HepG2 (cell line): ENCODE measurements at regions of chr6 and their contacts with region 1.

Region 1: DNA sequence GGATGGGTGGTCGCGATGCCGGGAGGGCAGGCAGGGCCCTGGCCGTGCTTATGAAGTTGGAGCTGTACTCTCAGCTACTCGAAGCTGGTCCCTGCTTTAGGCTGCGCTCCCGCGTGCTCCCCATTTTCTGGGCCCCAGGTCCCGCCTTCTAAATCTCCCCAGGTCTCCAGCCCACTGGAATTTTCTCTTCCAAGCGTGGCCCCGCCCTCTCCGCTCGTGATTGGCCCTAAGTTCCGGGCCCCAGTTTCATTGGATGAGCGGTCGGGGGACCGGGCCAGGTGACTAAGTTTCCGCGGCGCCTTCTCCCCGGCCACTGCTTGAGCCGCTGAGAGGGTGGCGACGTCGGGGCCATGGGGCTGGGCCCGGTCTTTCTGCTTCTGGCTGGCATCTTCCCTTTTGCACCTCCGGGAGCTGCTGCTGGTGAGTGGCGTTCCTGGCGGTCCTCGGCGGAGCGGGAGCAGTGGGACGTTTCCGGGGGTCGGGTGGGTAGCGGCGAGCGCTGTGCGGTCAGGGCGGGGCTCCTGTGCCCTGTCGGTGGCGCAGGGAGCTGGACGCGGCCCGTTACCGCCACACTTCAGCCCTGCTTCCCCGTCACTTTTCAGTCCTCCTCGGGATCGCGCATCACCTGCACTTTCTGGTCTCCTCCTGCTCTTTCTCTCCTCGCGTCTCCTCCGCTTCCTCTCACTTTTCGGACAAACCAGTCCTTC is at the start of gene MICA:
- DNase-seq: peak; percentile 91
- ATAC-seq: peak; percentile 84
- H3K4me3 ChIP-seq: peak within 1 kb of the TSS; percentile 88 to 96 (median 96)
- H3K27ac ChIP-seq: peak within 1 kb of the TSS; percentile 87
- H3K4me1 ChIP-seq: peaks cover 67% of the 10 kb centered on the region
- H3K27me3 ChIP-seq: no peaks in the 10 kb centered on the region; a peak in 1 of 5 replicates
- CTCF ChIP-seq: peak; percentile 36; the same call in 1 of the 2 replicates
- EP300 ChIP-seq: no peak
- POLR2A ChIP-seq: peak; percentile 70 to 94
- RAD21 ChIP-seq: no peak
- total RNA-seq, gene MICA: 20.5 and 38.1 TPM in 2 replicates

Region 2: DNA sequence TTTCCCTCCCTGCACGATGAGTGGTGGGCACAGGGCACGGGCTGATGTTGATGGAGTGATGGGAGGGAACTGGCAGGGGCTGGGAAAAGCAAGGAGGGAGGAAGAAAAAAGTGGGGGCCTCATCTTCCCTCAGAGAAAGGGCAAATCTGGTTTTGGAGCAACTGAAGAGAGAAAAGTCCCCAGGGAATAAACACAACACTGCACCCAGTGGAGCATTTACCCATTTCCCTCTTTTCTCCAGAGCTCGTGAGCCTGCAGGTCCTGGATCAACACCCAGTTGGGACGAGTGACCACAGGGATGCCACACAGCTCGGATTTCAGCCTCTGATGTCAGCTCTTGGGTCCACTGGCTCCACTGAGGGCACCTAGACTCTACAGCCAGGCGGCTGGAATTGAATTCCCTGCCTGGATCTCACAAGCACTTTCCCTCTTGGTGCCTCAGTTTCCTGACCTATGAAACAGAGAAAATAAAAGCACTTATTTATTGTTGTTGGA is 11.4 kb after region 1 on chr6:
- CTCF ChIA-PET with region 1: no interaction called
- POLR2A ChIA-PET with region 1: interaction called, 10 read pairs
- in situ Hi-C with region 1: no loop called
- intact Hi-C with region 1: no loop called
- DNase-seq: no peak
- ATAC-seq: peak; percentile 41
- H3K4me3 ChIP-seq: no peak overlapping the region
- H3K27ac ChIP-seq: peak overlapping the region; percentile 42
- H3K4me1 ChIP-seq: peaks cover 22% of the 10 kb centered on the region
- H3K27me3 ChIP-seq: no peaks in the 10 kb centered on the region
- CTCF ChIP-seq: no peak
- EP300 ChIP-seq: no peak
- POLR2A ChIP-seq: no peak
- RAD21 ChIP-seq: no peak

Region 3: GRCh38 chr6:31441365-31442267 is 38.2 kb after region 1 on chr6:
- CTCF ChIA-PET with region 1: interaction called, 102 read pairs
- POLR2A ChIA-PET with region 1: interaction called, 22 read pairs
- in situ Hi-C with region 1: loop called (anchors 5 kb)
- intact Hi-C with region 1: loop called (anchors 1 kb)
- DNase-seq: peak; percentile 60
- ATAC-seq: peak; percentile 95
- H3K4me3 ChIP-seq: peak overlapping the region in 1 of 3 experiments; percentile 38; a peak in 2 of 6 replicates
- H3K27ac ChIP-seq: no peak overlapping the region
- H3K4me1 ChIP-seq: peaks cover 17% of the 10 kb centered on the region
- H3K27me3 ChIP-seq: peaks cover 0 to 12% of the 10 kb centered on the region in 2 experiments; a peak in 3 of 5 replicates
- CTCF ChIP-seq: peak; percentile 95
- EP300 ChIP-seq: no peak
- POLR2A ChIP-seq: no peak
- RAD21 ChIP-seq: peak; percentile 83

Region 4: GRCh38 chr6:31462964-31463870 is 59.8 kb after region 1 on chr6:
- CTCF ChIA-PET with region 1: no interaction called
- POLR2A ChIA-PET with region 1: interaction called, 17 read pairs
- in situ Hi-C with region 1: no loop called
- intact Hi-C with region 1: no loop called
- DNase-seq: peak; percentile 92
- ATAC-seq: peak; percentile 99
- H3K4me3 ChIP-seq: peak overlapping the region; percentile 42 to 59 (median 51)
- H3K27ac ChIP-seq: no peak overlapping the region
- H3K4me1 ChIP-seq: peaks cover 17% of the 10 kb centered on the region
- H3K27me3 ChIP-seq: peaks cover 0 to 7% of the 10 kb centered on the region in 2 experiments; a peak in 3 of 5 replicates
- CTCF ChIP-seq: no peak
- EP300 ChIP-seq: no peak
- POLR2A ChIP-seq: peak; percentile 69 to 84
- RAD21 ChIP-seq: no peak

Region 5: GRCh38 chr6:31776989-31777666 is 373.7 kb after region 1 on chr6 and contains the start of gene VWA7:
- CTCF ChIA-PET with region 1: no interaction called
- POLR2A ChIA-PET with region 1: no interaction called
- in situ Hi-C with region 1: no loop called
- intact Hi-C with region 1: no loop called
- DNase-seq: peak; percentile 85
- ATAC-seq: peak; percentile 65
- H3K4me3 ChIP-seq: peak within 1 kb of the TSS; percentile 45 to 72 (median 48)
- H3K27ac ChIP-seq: peak within 1 kb of the TSS; percentile 70
- H3K4me1 ChIP-seq: peaks cover 57% of the 10 kb centered on the region
- H3K27me3 ChIP-seq: no peaks in the 10 kb centered on the region
- CTCF ChIP-seq: peak; percentile 26
- EP300 ChIP-seq: peak in 1 of 2 experiments; percentile 45; a peak in 1 of 4 replicates
- POLR2A ChIP-seq: no peak; a peak in 1 of 4 replicates
- RAD21 ChIP-seq: no peak
- total RNA-seq, gene VWA7: 0.79 and 0.86 TPM in 2 replicates